ENCODE measurements at regions of chr6 and their contacts with region 1.

Region 1: DNA sequence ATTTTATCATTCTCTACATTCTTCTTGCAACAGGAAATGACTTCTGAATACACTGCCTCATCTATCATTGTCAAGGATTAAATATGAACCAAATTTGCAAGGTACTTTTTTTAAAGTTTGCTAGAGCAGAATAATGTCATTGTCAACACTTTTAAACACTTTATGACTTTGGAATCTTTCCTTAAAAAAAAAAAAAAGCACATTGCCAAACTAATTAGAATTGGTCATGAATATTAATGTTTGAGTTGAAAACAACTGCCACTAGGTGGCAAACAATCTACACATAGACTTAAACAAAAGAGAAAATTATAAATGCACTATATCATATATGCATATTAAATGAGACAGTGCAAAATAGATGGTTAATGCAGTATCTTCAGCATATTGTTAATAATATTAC is 32.5 kb upstream of the TMEM244 start:
- DNase-seq: peak; percentile 51
- ATAC-seq: no peak
- H3K4me3 ChIP-seq: no peak overlapping the region
- H3K27ac ChIP-seq: no peak overlapping the region
- H3K4me1 ChIP-seq: peaks cover 3% of the 10 kb centered on the region
- H3K27me3 ChIP-seq: no peaks in the 10 kb centered on the region
- CTCF ChIP-seq: peak; percentile 51
- POLR2A ChIP-seq: no peak
- RAD21 ChIP-seq: peak; percentile 51

Region 2: DNA sequence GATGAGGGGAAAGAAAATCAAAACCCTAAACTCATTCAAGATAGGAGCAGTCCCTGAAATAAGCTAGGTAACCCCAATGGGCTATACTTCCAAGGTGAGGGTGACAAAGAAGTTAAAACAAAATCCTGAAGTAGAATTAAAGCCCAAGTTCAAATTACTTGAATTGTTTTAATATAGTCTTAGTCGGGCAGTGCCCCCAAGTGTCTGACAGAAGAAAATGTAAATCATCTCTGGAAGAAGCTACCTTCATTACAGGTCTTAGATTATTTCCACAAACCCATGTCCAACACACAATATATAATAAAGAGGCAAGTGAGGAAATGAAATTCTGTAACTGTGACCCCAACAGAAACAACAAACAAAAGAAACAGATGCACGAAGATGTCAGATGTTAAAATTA is 88.0 kb after region 1 on chr6:
- CTCF ChIA-PET with region 1: interaction called, 4 read pairs
- POLR2A ChIA-PET with region 1: no interaction called
- dilution Hi-C with region 1: no loop called
- in situ Hi-C with region 1: no loop called
- intact Hi-C with region 1: loop called (anchors 2 kb)
- DNase-seq: peak; percentile 33
- ATAC-seq: peak; percentile 37; the same call in 1 of the 2 replicates
- H3K4me3 ChIP-seq: no peak overlapping the region
- H3K27ac ChIP-seq: no peak overlapping the region
- H3K4me1 ChIP-seq: no peaks in the 10 kb centered on the region
- H3K27me3 ChIP-seq: no peaks in the 10 kb centered on the region
- CTCF ChIP-seq: peak; percentile 48
- POLR2A ChIP-seq: no peak
- RAD21 ChIP-seq: peak; percentile 41

Region 3: GRCh38 chr6:130070792-130071191 is 177.2 kb after region 1 on chr6:
- CTCF ChIA-PET with region 1: no interaction called
- POLR2A ChIA-PET with region 1: no interaction called
- dilution Hi-C with region 1: no loop called
- in situ Hi-C with region 1: no loop called
- intact Hi-C with region 1: no loop called
- DNase-seq: no peak
- ATAC-seq: no peak
- H3K4me3 ChIP-seq: no peak overlapping the region
- H3K27ac ChIP-seq: no peak overlapping the region
- H3K4me1 ChIP-seq: peaks cover 2% of the 10 kb centered on the region
- H3K27me3 ChIP-seq: no peaks in the 10 kb centered on the region
- CTCF ChIP-seq: no peak
- POLR2A ChIP-seq: no peak
- RAD21 ChIP-seq: no peak